H1 (cell line): ENCODE measurements at regions of chr11 and their contacts with region 1.

Region 1: DNA sequence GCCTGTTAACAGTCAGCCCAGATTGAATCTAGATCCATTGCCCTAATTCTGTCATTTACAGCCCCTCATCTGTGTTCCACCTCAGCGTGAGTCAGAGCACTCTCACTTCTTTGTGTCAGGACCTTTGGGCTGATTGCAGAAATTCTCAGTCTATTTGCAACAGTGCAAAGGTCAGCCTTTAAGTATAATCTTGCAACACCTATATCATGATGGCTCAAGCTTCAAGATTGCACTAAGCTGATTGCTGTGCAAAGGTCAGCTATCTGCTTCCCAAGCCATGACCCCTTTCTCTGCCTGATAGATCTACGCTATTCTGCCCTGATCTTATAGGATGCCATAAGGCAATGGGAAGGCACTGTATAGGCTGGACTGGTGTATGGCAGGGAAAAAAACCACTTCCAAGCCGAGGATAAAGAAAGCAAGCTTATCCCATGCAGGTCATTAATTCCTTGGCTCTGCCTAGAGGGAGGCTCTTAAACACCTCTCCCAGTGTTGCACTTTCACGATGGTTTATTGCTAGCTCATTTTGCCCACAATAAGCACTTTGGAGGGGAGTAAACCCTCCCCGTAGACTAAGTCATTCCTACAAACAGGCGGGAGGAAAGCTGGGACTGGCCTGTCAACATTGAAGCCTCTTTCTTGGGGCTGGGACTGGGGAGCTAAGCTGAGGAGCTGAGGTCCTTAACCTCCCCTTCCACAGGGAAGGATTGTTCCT is 100.6 kb downstream of the RRAS2 start:
- DNase-seq: peak in 1 of 2 experiments; percentile 40
- H3K4me3 ChIP-seq: no peak overlapping the region
- H3K27ac ChIP-seq: no peak overlapping the region
- H3K4me1 ChIP-seq: no peaks in the 10 kb centered on the region; a peak in 1 of 7 replicates
- H3K27me3 ChIP-seq: no peaks in the 10 kb centered on the region
- CTCF ChIP-seq: no peak
- EP300 ChIP-seq: no peak
- POLR2A ChIP-seq: no peak
- RAD21 ChIP-seq: no peak

Region 2: GRCh38 chr11:14449302-14449714 is 190.9 kb after region 1 on chr11:
- CTCF ChIA-PET with region 1: interaction called, 11 read pairs
- POLR2A ChIA-PET with region 1: no interaction called
- DNase-seq: no peak
- H3K4me3 ChIP-seq: no peak overlapping the region
- H3K27ac ChIP-seq: no peak overlapping the region
- H3K4me1 ChIP-seq: no peaks in the 10 kb centered on the region
- H3K27me3 ChIP-seq: no peaks in the 10 kb centered on the region
- CTCF ChIP-seq: no peak
- EP300 ChIP-seq: no peak
- POLR2A ChIP-seq: no peak
- RAD21 ChIP-seq: no peak